ENCODE measurements at regions of chr2 and their contacts with region 1.

Region 1: DNA sequence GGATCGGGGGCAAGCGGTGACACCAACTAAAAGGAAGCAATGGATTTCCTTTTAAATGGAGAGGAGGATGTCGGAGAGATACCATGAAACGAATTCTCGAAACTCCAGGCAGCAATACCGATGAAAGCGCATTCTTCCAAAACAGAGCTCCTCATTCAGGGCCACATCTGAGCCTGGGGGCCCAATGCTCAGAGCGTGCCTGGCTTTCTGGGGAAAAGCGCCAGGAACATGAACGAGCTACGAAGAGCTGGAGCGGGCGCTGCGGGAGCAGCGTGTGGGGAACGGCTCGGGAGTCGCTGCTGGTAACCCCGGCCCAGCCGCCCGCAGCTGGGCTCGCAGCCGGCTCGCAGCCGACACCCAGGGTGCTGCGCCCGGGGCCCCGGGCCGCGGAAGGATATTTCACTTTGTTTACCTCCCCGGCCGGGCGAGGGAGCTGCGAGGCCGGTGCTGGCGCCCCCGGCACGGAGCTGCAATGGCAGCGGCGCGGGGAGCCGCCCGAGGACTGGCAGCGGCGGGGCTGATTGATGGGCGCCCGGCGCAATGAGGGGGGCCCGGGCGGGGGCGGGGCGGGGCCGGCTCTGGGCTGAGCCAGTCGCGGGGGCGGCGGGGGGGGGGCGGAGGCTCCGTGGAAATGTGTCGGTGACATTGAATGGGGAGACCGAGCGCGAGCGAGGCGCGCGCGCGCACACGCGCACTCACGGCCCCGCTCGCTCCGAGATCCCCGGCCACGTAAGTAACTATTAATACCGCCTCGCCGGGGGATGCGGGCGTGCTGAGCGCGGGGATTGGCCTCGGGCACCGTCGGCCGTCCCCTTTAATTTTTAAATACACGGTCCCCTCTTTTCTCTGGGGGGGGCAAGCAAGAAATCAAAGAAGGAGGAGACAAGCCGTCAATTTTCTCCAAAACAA is at the start of gene TRIB2:
- DNase-seq: peak; percentile 87
- ATAC-seq: peak; percentile 83
- H3K4me3 Mint-ChIP-seq: peak within 1 kb of the TSS; percentile 96
- H3K27ac Mint-ChIP-seq: peak within 1 kb of the TSS; percentile 89
- H3K4me1 Mint-ChIP-seq: peaks cover 38% of the 10 kb centered on the region
- H3K27me3 Mint-ChIP-seq: no peaks in the 10 kb centered on the region
- CTCF ChIP-seq: peak; percentile 22
- total RNA-seq, gene TRIB2: 9.2 to 11.0 TPM

Region 2: GRCh38 chr2:11829947-11830707 is 886.4 kb before region 1 on chr2:
- CTCF ChIA-PET with region 1: interaction called, 17 read pairs
- POLR2A ChIA-PET with region 1: no interaction called
- intact Hi-C with region 1: loop called (anchors 5 kb)
- DNase-seq: peak; percentile 69
- ATAC-seq: peak; percentile 78
- H3K4me3 Mint-ChIP-seq: peak overlapping the region; percentile 49
- H3K27ac Mint-ChIP-seq: peak overlapping the region; percentile 72
- H3K4me1 Mint-ChIP-seq: peaks cover 54% of the 10 kb centered on the region
- H3K27me3 Mint-ChIP-seq: peaks cover 15% of the 10 kb centered on the region
- CTCF ChIP-seq: no peak

Region 3: GRCh38 chr2:12416600-12416999 is 299.9 kb before region 1 on chr2:
- CTCF ChIA-PET with region 1: interaction called, 27 read pairs
- POLR2A ChIA-PET with region 1: no interaction called
- intact Hi-C with region 1: loop called (anchors 5 kb)
- DNase-seq: peak; percentile 67
- ATAC-seq: no peak
- H3K4me3 Mint-ChIP-seq: no peak overlapping the region
- H3K27ac Mint-ChIP-seq: no peak overlapping the region
- H3K4me1 Mint-ChIP-seq: peaks cover 30% of the 10 kb centered on the region
- H3K27me3 Mint-ChIP-seq: no peaks in the 10 kb centered on the region
- CTCF ChIP-seq: peak; percentile 41

Region 4: DNA sequence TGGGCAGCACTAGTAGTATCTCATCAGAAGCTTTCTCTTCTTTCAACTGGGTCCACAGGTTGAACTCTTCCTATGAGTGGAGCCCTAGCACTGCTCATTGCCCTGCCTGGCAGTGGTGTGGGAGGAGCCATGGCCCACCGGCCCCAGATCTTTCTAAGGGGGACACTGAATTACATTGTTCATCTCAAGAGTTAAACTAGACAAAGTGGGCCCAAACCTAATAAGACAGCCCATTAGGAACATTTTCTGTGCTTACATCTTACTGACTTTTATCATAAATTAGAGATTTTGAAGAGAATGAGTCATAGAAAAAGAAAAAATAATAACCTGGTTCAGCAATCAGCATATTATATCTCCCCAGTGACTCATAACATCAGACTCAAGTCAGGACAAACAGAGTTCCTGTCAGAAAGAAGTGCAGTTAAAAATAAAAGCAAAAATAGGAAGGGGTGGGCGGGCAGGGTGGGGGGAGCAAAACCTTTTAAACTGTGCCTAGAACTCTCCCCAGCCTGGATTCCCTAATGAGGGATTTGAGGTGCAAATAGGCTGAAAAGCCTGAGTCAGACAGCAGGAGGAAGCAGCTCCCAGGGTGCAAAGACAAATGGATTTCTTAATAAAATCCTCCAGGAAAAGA is 161.4 kb before region 1 on chr2:
- CTCF ChIA-PET with region 1: interaction called, 19 read pairs
- POLR2A ChIA-PET with region 1: no interaction called
- intact Hi-C with region 1: no loop called
- DNase-seq: peak; percentile 59
- ATAC-seq: peak; percentile 89
- H3K4me3 Mint-ChIP-seq: peak overlapping the region; percentile 4
- H3K27ac Mint-ChIP-seq: peak overlapping the region; percentile 77
- H3K4me1 Mint-ChIP-seq: peaks cover 34% of the 10 kb centered on the region
- H3K27me3 Mint-ChIP-seq: no peaks in the 10 kb centered on the region
- CTCF ChIP-seq: no peak

Region 5: DNA sequence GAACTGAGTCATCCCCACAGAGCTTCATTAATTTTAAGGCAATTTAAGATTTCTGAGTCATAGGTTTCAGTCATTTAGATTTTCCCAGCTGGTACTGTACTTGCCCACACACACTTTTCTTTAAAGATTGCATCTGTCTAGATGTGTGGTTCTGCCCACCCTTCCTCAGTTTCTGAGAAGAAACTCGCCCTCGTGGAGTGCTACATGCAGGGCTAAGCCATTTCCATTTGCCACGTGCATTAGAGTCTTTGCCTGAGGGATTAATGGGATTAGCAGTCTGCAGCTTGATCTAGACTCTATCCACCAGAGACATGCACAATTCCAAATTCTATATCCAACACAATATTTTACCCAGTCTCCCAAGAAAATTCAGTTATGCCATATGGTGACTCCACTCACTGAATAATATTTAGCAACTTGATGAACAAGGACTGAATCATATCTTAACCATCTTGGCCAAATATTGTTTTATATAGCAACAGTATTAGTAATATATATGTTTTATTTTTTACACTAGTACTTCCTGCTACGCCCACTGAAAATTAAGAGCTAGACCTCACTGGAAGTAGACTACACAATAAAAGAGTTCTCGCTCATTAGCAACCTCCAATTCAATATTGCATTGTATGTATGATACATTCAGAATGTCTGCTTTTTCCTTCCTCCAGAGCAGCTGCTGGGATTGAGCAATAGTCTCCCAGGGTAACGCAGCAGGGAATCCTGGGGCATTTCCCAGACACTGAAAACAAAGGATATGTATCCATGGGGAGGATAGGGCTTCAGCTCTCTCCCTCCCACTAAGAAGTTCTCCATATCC is 14.0 kb before region 1 on chr2:
- CTCF ChIA-PET with region 1: interaction called, 19 read pairs
- POLR2A ChIA-PET with region 1: interaction called, 3 read pairs
- intact Hi-C with region 1: no loop called
- DNase-seq: peak; percentile 39
- ATAC-seq: peak; percentile 86
- H3K4me3 Mint-ChIP-seq: no peak overlapping the region
- H3K27ac Mint-ChIP-seq: no peak overlapping the region
- H3K4me1 Mint-ChIP-seq: peaks cover 36% of the 10 kb centered on the region
- H3K27me3 Mint-ChIP-seq: no peaks in the 10 kb centered on the region
- CTCF ChIP-seq: no peak

Region 6: DNA sequence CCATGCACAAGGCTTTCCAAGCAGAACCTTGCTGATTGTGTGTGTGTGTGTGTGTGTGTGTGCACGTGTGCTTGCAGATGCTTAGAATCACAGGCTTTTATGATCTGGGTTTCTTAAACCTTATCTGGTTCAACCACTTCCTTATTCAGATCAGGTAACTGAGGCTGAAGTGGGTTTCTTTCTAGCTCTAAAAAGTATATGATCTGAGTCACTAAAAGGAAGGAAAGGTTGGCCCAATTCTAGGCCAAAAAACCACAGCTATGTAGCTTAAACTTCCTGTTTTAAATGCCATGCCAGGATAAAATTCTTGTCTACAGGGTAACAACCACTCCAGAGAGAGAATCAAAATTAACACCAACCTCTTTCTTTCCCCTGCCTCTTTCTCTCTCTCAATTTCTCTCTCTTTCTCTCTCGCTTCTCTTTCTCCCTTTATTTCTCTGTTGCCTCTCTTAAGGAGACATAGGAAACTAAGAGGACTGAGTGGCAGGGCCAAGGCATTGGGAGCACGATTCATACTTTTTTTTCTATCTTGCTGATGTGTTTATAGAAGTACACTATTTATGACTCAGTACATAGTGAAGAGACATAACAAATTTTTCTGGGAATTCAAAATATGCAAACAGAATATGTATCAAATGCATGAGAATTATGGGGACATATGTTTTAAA is 140.5 kb after region 1 on chr2:
- CTCF ChIA-PET with region 1: no interaction called
- POLR2A ChIA-PET with region 1: no interaction called
- intact Hi-C with region 1: loop called (anchors 5 kb)
- DNase-seq: peak; percentile 54
- ATAC-seq: peak; percentile 82
- H3K4me3 Mint-ChIP-seq: no peak overlapping the region
- H3K27ac Mint-ChIP-seq: peak overlapping the region; percentile 49
- H3K4me1 Mint-ChIP-seq: peaks cover 12% of the 10 kb centered on the region
- H3K27me3 Mint-ChIP-seq: peaks cover 36% of the 10 kb centered on the region
- CTCF ChIP-seq: no peak